Right lobe of liver (tissue), 6 donors: ENCODE measurements at regions of chr10 and their contacts with region 1.

Region 1: GRCh38 chr10:100046021-100046486 is 35.6 kb downstream of the CPN1 start:
- DNase-seq: peak; percentile 85
- ATAC-seq: peak; percentile 85 to 97 (median 90)
- H3K4me3 ChIP-seq: no peak overlapping the region
- H3K27ac ChIP-seq: no peak overlapping the region
- H3K4me1 ChIP-seq: no peaks in the 10 kb centered on the region
- H3K27me3 ChIP-seq: no peaks in the 10 kb centered on the region
- CTCF ChIP-seq: peak; percentile 77 to 97 (median 94)
- POLR2A ChIP-seq: no peak

Region 2: DNA sequence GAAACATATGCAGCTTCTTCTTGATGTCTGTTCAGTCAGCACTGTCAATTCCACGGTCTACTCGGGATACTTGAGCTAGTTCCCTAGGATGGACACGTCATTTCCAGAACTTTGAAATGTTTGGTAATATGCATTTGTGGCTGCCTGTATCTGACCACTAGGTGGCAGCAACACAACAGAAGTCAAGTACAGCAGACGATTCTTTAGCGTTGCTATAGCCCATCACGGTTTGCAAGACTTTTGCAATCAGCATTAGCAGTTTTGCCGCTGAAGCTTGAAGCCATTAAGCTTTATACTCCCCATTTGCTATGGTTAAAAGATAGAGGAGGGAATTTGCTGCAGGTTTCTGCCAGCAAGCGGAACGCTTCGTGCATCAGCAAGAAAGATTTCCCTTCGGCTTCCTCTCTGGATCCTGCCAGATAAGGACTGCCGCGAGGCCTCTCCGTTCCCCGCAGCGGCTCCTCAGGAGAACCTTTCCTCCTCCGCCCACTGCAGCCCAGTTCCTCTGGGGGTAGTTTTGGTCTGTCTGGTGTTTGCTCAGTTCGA is 200.1 kb before region 1 on chr10:
- intact Hi-C with region 1: loop called (anchors 10 kb)
- DNase-seq: peak in 2 of 3 donors; percentile 38 to 70
- ATAC-seq: peak; percentile 74 to 83 (median 80)
- H3K4me3 ChIP-seq: no peak overlapping the region
- H3K27ac ChIP-seq: no peak overlapping the region
- H3K4me1 ChIP-seq: peaks cover 0 to 56% (median 18%) of the 10 kb centered on the region in 4 donors
- H3K27me3 ChIP-seq: no peaks in the 10 kb centered on the region
- CTCF ChIP-seq: peak; percentile 89 to 97 (median 92)
- POLR2A ChIP-seq: no peak

Region 3: DNA sequence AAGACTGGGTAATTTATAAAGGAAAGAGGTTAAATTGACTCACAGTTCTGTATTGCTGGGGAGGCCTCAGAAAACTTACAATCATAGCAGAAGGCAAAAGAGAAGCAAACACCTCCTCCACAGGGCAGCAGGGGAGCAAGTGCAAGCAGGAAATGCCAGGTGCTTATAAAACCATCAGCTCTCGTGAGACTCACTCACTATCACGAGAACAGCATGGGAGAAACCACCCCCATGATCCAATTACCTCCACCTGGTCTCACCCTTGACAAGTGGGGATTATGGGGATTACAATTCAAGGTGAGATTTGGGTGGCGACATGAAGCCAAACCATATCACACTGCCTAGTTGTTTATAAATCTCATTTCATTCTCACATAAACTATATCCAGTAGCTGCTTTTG is 63.6 kb after region 1 on chr10:
- intact Hi-C with region 1: no loop called
- DNase-seq: no peak
- ATAC-seq: no peak
- H3K4me3 ChIP-seq: no peak overlapping the region
- H3K27ac ChIP-seq: no peak overlapping the region
- H3K4me1 ChIP-seq: no peaks in the 10 kb centered on the region
- H3K27me3 ChIP-seq: no peaks in the 10 kb centered on the region
- CTCF ChIP-seq: no peak
- POLR2A ChIP-seq: no peak